ENCODE measurements at regions of chrX and their contacts with region 1.

Region 1: GRCh38 chrX:108070891-108071290 is 20.5 kb downstream of the PSMD10 start:
- DNase-seq: no peak
- ATAC-seq: no peak
- H3K4me3 Mint-ChIP-seq: no peak overlapping the region
- H3K27ac Mint-ChIP-seq: no peak overlapping the region
- H3K4me1 Mint-ChIP-seq: peaks cover 3% of the 10 kb centered on the region
- H3K27me3 Mint-ChIP-seq: no peaks in the 10 kb centered on the region
- CTCF ChIP-seq: no peak

Region 2: GRCh38 chrX:106481341-106481740 is 1589.5 kb before region 1 on chrX:
- CTCF ChIA-PET with region 1: no interaction called
- POLR2A ChIA-PET with region 1: no interaction called
- intact Hi-C with region 1: loop called (anchors 5 kb)
- DNase-seq: no peak
- ATAC-seq: no peak
- H3K4me3 Mint-ChIP-seq: no peak overlapping the region
- H3K27ac Mint-ChIP-seq: no peak overlapping the region
- H3K4me1 Mint-ChIP-seq: peaks cover 7% of the 10 kb centered on the region
- H3K27me3 Mint-ChIP-seq: no peaks in the 10 kb centered on the region
- CTCF ChIP-seq: peak; percentile 18

Region 3: DNA sequence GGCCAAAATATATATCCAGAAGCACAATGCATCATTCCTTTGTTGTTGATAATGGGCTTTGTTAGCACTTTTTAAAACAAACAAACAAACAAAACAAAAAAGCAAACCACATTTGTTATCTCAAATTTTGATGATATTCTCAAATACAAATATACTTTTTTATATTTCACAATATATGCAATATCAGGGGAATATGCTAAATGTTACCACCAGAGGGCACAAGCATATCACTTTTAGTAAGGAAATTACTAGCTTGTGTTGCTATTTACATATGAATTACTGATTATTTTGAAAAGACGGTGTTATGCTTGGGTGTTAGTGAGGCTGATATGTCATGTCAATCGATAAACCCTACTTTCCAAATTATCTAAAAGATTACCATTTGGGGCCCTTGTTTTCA is 1196.8 kb before region 1 on chrX:
- CTCF ChIA-PET with region 1: interaction called, 3 read pairs
- POLR2A ChIA-PET with region 1: no interaction called
- intact Hi-C with region 1: loop called (anchors 2 kb)
- DNase-seq: no peak
- ATAC-seq: no peak
- H3K4me3 Mint-ChIP-seq: no peak overlapping the region
- H3K27ac Mint-ChIP-seq: no peak overlapping the region
- H3K4me1 Mint-ChIP-seq: no peaks in the 10 kb centered on the region
- H3K27me3 Mint-ChIP-seq: no peaks in the 10 kb centered on the region
- CTCF ChIP-seq: no peak

Region 4: GRCh38 chrX:107654872-107655761 is 415.8 kb before region 1 on chrX:
- CTCF ChIA-PET with region 1: no interaction called
- POLR2A ChIA-PET with region 1: no interaction called
- intact Hi-C with region 1: loop called (anchors 1 kb)
- DNase-seq: peak; percentile 40
- ATAC-seq: peak; percentile 86
- H3K4me3 Mint-ChIP-seq: no peak overlapping the region
- H3K27ac Mint-ChIP-seq: no peak overlapping the region
- H3K4me1 Mint-ChIP-seq: peaks cover 10% of the 10 kb centered on the region
- H3K27me3 Mint-ChIP-seq: no peaks in the 10 kb centered on the region
- CTCF ChIP-seq: no peak

Region 5: GRCh38 chrX:108020631-108021030 is 50.3 kb before region 1 on chrX:
- CTCF ChIA-PET with region 1: interaction called, 23 read pairs
- POLR2A ChIA-PET with region 1: no interaction called
- intact Hi-C with region 1: loop called (anchors 1 kb)
- DNase-seq: no peak
- ATAC-seq: no peak
- H3K4me3 Mint-ChIP-seq: peak overlapping the region; percentile 15
- H3K27ac Mint-ChIP-seq: peak overlapping the region; percentile 46
- H3K4me1 Mint-ChIP-seq: peaks cover 30% of the 10 kb centered on the region
- H3K27me3 Mint-ChIP-seq: no peaks in the 10 kb centered on the region
- CTCF ChIP-seq: no peak

Region 6: GRCh38 chrX:108245459-108245858 is 174.6 kb after region 1 on chrX:
- CTCF ChIA-PET with region 1: no interaction called
- POLR2A ChIA-PET with region 1: no interaction called
- intact Hi-C with region 1: no loop called
- DNase-seq: no peak
- ATAC-seq: no peak
- H3K4me3 Mint-ChIP-seq: no peak overlapping the region
- H3K27ac Mint-ChIP-seq: no peak overlapping the region
- H3K4me1 Mint-ChIP-seq: no peaks in the 10 kb centered on the region
- H3K27me3 Mint-ChIP-seq: peaks cover 2% of the 10 kb centered on the region
- CTCF ChIP-seq: no peak

Measured in activated B cell treated with CpG ODN at 0.5 μM for 24 hours (primary cell).